ENCODE measurements at regions of chr19 and their contacts with region 1.

Region 1: DNA sequence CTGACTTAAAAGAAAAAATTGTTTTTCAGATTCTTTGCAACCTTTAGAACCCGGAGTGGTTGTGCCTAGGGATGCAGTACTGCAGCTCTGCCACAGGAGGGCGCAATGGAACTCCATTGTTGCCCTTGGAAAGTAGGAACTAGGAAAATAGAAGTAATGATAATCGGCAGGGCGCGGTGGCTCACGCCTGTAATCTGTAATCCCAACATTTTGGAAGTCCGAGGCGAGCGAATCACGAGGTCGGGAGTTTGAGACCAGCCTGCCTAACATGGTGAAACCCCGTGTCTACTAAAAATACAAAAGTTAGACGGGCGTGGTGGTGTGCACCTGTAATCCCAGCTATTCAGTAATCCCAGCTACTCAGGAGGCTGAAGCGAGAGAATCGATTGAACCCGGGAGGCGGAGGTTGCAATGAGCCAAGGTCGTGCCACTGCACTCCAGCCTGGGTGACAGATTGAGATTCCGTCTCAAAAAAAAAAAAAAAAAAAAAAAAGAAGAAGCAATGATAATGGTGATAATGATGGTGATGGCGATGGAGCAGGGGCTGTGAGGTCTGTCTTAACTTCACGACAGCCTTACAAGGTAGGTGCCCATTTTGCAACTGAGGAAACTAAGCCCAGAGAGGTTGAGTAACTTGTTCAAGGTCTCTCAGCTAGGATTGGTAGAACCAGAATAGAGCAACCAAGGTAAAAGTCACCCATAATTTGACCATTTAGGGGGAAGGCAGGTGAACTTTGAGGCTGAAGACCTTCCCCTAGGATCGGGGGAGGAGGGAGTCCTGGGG is 5.5 kb upstream of the ADAMTS10 start:
- DNase-seq: peak; percentile 67
- ATAC-seq: peak; percentile 32
- H3K4me3 Mint-ChIP-seq: no peak overlapping the region
- H3K27ac Mint-ChIP-seq: no peak overlapping the region
- H3K4me1 Mint-ChIP-seq: peaks cover 20% of the 10 kb centered on the region
- H3K27me3 Mint-ChIP-seq: peaks cover 1% of the 10 kb centered on the region
- CTCF ChIP-seq: peak; percentile 95

Region 2: GRCh38 chr19:8641908-8642547 is 26.0 kb after region 1 on chr19:
- CTCF ChIA-PET with region 1: interaction called, 22 read pairs
- POLR2A ChIA-PET with region 1: no interaction called
- intact Hi-C with region 1: no loop called
- DNase-seq: peak; percentile 21
- ATAC-seq: no peak
- H3K4me3 Mint-ChIP-seq: no peak overlapping the region
- H3K27ac Mint-ChIP-seq: no peak overlapping the region
- H3K4me1 Mint-ChIP-seq: peaks cover 5% of the 10 kb centered on the region
- H3K27me3 Mint-ChIP-seq: peaks cover 5% of the 10 kb centered on the region
- CTCF ChIP-seq: peak; percentile 63

Measured in activated CD8-positive, alpha-beta T cell treated with anti-CD3 and anti-CD28 coated beads for 36 hours (primary cell).